ENCODE measurements at regions of chr7 and their contacts with region 1.

Region 1: GRCh38 chr7:74709880-74710671 is 52.6 kb downstream of the GTF2I start:
- DNase-seq: no peak
- H3K4me3 ChIP-seq: no peak overlapping the region
- H3K27ac ChIP-seq: no peak overlapping the region
- H3K4me1 ChIP-seq: no peaks in the 10 kb centered on the region
- H3K27me3 ChIP-seq: no peaks in the 10 kb centered on the region
- CTCF ChIP-seq: peak; percentile 31; the same call in 1 of the 2 replicates
- EP300 ChIP-seq: no peak
- RAD21 ChIP-seq: no peak

Region 2: GRCh38 chr7:74343281-74344127 is 366.6 kb before region 1 on chr7:
- CTCF ChIA-PET with region 1: no interaction called
- POLR2A ChIA-PET with region 1: no interaction called
- DNase-seq: no peak
- H3K4me3 ChIP-seq: no peak overlapping the region; a peak in 1 of 4 replicates
- H3K27ac ChIP-seq: peak overlapping the region in 1 of 2 experiments; percentile 76; a peak in 2 of 4 replicates
- H3K4me1 ChIP-seq: peaks cover 0 to 4% of the 10 kb centered on the region in 2 experiments; a peak in 2 of 4 replicates
- H3K27me3 ChIP-seq: no peaks in the 10 kb centered on the region
- CTCF ChIP-seq: no peak
- EP300 ChIP-seq: no peak; a peak in 1 of 4 replicates
- RAD21 ChIP-seq: no peak

Region 3: GRCh38 chr7:74722153-74722552 is 12.1 kb after region 1 on chr7:
- CTCF ChIA-PET with region 1: interaction called, 10 read pairs
- POLR2A ChIA-PET with region 1: no interaction called
- DNase-seq: no peak
- H3K4me3 ChIP-seq: no peak overlapping the region
- H3K27ac ChIP-seq: no peak overlapping the region
- H3K4me1 ChIP-seq: peaks cover 2 to 4% of the 10 kb centered on the region in 2 experiments; a peak in 2 of 4 replicates
- H3K27me3 ChIP-seq: no peaks in the 10 kb centered on the region
- CTCF ChIP-seq: no peak
- EP300 ChIP-seq: no peak
- RAD21 ChIP-seq: no peak

Region 4: DNA sequence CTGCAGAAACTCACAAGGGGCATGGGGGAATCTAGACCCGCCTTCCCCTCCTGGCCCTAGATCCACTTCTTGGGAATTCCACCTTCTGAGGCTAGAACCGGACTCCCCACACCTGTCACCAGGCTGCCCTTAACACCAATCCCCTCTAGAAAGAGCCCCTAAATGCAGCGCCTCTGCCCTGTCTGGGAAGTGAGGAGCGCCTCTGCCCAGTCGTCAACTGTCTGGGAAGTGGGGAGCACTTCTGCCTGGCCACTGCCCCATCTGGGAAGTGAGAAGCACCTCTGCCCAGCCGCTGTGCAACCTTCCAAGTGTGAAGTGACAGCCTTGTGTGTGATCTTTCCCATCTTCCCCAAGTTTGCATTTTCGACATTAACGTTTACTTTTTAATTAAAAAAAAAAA is 354.7 kb after region 1 on chr7:
- CTCF ChIA-PET with region 1: no interaction called
- POLR2A ChIA-PET with region 1: no interaction called
- DNase-seq: no peak
- H3K4me3 ChIP-seq: no peak overlapping the region
- H3K27ac ChIP-seq: no peak overlapping the region
- H3K4me1 ChIP-seq: no peaks in the 10 kb centered on the region
- H3K27me3 ChIP-seq: no peaks in the 10 kb centered on the region
- CTCF ChIP-seq: no peak
- EP300 ChIP-seq: no peak
- RAD21 ChIP-seq: no peak